ENCODE measurements at regions of chr6 and their contacts with region 1.

Region 1: GRCh38 chr6:89940225-89941027 is 46.2 kb downstream of the GJA10 start:
- DNase-seq: peak; percentile 83
- H3K4me3 Mint-ChIP-seq: no peak overlapping the region
- H3K27ac Mint-ChIP-seq: peak overlapping the region; percentile 77
- H3K4me1 Mint-ChIP-seq: peaks cover 49% of the 10 kb centered on the region
- H3K27me3 Mint-ChIP-seq: no peaks in the 10 kb centered on the region

Region 2: GRCh38 chr6:89952686-89953085 is 12.3 kb after region 1 on chr6:
- CTCF ChIA-PET with region 1: interaction called, 15 read pairs
- DNase-seq: peak; percentile 78
- H3K4me3 Mint-ChIP-seq: peak overlapping the region; percentile 48
- H3K27ac Mint-ChIP-seq: peak overlapping the region; percentile 92
- H3K4me1 Mint-ChIP-seq: peaks cover 75% of the 10 kb centered on the region
- H3K27me3 Mint-ChIP-seq: no peaks in the 10 kb centered on the region

Region 3: GRCh38 chr6:90110971-90111370 is 170.5 kb after region 1 on chr6:
- CTCF ChIA-PET with region 1: interaction called, 27 read pairs
- DNase-seq: peak; percentile 91
- H3K4me3 Mint-ChIP-seq: peak overlapping the region; percentile 19
- H3K27ac Mint-ChIP-seq: peak overlapping the region; percentile 88
- H3K4me1 Mint-ChIP-seq: peaks cover 77% of the 10 kb centered on the region
- H3K27me3 Mint-ChIP-seq: no peaks in the 10 kb centered on the region

Region 4: DNA sequence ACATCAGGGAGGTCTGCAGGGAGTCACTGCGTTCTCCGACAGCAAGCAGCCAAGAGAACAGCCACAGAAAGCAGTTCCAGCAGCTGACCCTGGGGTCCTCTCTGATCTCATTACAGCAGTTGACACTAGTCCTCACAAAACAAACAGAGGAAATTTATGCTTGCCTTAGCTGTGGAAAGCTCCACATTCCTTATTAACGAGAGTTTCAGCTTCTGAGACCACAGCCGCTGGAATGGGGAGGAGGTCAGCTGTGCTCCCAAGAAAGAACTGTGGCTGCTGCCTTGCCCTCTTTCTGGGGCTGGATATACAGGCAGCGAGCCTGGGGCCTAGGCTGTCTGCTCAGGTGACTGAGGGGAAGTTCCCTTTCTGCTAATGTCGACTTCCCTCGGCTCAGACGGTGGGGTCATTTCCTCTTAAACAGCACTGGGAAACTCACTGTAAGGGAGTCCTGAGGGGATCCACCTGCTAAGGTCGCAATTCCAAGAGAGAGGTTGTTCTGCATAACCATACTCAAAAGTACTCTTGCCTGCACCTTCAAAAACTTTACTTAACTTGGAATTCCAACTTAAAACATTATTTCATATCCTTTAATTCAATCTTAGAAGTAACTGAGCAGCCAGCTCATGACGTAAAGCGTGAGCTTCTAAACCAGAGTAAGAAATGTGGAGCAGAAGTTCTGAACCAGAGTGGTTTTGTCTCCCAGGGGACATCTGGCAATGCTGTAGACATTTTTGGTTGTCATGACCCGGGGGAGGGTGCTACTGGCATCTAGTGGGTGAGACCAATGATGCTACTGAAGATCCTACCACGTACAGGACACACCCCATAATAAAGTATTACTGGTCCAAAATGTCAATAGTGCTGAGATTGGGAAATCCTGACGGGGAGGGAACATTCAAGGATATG is 275.9 kb after region 1 on chr6:
- CTCF ChIA-PET with region 1: interaction called, 17 read pairs
- DNase-seq: peak; percentile 56
- H3K4me3 Mint-ChIP-seq: peak overlapping the region; percentile 17
- H3K27ac Mint-ChIP-seq: no peak overlapping the region
- H3K4me1 Mint-ChIP-seq: peaks cover 31% of the 10 kb centered on the region
- H3K27me3 Mint-ChIP-seq: no peaks in the 10 kb centered on the region

Region 5: GRCh38 chr6:90393232-90393884 is 452.9 kb after region 1 on chr6:
- CTCF ChIA-PET with region 1: interaction called, 19 read pairs
- DNase-seq: peak; percentile 85
- H3K4me3 Mint-ChIP-seq: no peak overlapping the region
- H3K27ac Mint-ChIP-seq: peak overlapping the region; percentile 1
- H3K4me1 Mint-ChIP-seq: peaks cover 55% of the 10 kb centered on the region
- H3K27me3 Mint-ChIP-seq: no peaks in the 10 kb centered on the region